ENCODE measurements at regions of chr1 and their contacts with region 1.

Region 1: DNA sequence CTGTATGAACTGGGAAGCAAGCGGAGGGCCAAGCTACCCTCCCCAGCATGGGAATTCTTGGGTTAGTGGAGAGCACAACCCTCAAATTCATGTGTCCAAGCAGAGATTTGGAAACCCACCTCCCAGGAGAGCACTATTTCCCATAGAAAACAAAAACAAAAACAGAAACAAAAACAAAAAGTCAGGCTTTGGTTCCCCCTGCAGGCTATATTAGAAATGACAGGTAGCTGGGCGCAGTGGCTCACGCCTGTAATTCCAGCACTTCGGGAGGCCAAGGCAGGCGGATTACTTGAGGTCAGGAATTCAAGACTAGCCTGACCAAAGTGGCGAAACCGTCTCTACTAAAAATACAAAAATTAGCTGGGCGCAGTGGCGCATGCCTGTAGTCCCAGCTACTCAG is 10.8 kb downstream of the MINDY1 start:
- DNase-seq: no peak
- H3K4me3 ChIP-seq: no peak overlapping the region
- CTCF ChIP-seq: peak; percentile 51

Region 2: DNA sequence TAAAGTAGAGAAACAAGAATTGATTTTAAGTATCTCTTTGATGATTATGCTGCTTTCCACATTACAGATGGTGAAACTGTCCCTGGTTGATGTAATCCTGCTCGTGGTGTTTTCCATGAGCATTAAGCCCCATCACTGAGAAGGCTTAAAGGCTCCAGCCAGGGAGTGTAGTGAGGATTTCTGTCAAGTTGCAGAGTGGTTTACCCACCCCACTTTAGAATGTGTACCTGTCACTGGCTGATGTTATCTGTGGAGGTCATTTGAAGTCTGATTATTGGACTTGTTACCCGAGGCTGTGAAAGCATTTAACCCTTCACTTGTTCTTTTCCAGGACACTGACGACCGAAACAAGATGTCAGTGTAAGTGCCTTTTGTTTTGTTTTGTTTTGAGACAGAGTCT is 34.1 kb before region 1 on chr1:
- CTCF ChIA-PET with region 1: interaction called, 14 read pairs
- POLR2A ChIA-PET with region 1: no interaction called
- DNase-seq: no peak
- H3K4me3 ChIP-seq: no peak overlapping the region
- CTCF ChIP-seq: no peak

Region 3: DNA sequence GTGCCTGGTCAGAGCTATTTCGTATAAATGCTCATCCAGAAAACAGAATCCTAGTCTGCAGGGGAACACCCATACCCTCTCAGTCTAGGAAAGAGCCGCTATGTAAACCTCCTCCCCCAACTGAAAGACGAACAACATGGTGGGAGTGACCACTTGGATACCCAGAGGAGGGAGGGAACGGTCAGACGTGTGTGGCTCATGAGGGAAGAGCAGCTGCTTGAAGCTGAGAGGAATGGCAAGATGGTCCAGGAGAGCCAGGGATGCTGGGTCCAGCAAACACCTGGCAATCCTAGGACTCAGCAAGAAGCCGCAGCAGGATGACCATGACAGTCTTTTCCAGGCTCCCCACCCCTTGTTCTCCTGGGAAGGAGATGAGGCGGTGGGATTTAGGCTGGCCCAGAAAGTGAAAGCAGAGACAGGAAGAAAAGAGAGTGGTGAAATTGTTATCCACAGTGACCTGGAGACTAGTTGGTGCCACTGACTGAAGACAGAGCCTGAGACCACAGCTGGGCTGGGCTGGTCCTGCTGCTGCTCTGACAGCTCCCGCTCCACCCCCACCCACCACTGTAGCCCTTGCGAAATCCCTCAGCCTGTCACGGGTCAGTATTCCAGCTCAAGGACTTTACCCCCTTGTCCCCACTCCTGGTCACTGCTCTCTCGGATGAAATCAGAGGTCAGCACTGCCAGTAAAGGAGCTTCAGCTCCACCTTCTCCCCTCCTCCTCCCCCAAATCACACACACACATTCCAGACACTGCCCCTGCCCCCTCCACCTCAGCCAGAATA is 24.9 kb before region 1 on chr1:
- CTCF ChIA-PET with region 1: interaction called, 551 read pairs
- POLR2A ChIA-PET with region 1: no interaction called
- DNase-seq: no peak
- H3K4me3 ChIP-seq: peak overlapping the region; percentile 13; the same call in 1 of the 2 replicates
- CTCF ChIP-seq: no peak

Region 4: GRCh38 chr1:151006327-151007052 is 10.6 kb after region 1 on chr1 and contains the start of gene MINDY1:
- CTCF ChIA-PET with region 1: interaction called, 551 read pairs
- POLR2A ChIA-PET with region 1: interaction called, 3 read pairs
- DNase-seq: no peak
- H3K4me3 ChIP-seq: peak within 1 kb of the TSS; percentile 71
- CTCF ChIP-seq: peak; percentile 80

Region 5: GRCh38 chr1:151013518-151013917 is 17.6 kb after region 1 on chr1:
- CTCF ChIA-PET with region 1: interaction called, 15 read pairs
- POLR2A ChIA-PET with region 1: no interaction called
- DNase-seq: no peak
- H3K4me3 ChIP-seq: no peak overlapping the region
- CTCF ChIP-seq: no peak